Naive thymus-derived CD4-positive, alpha-beta T cell (primary cell): ENCODE measurements at regions of chr14 and their contacts with region 1.

Region 1: DNA sequence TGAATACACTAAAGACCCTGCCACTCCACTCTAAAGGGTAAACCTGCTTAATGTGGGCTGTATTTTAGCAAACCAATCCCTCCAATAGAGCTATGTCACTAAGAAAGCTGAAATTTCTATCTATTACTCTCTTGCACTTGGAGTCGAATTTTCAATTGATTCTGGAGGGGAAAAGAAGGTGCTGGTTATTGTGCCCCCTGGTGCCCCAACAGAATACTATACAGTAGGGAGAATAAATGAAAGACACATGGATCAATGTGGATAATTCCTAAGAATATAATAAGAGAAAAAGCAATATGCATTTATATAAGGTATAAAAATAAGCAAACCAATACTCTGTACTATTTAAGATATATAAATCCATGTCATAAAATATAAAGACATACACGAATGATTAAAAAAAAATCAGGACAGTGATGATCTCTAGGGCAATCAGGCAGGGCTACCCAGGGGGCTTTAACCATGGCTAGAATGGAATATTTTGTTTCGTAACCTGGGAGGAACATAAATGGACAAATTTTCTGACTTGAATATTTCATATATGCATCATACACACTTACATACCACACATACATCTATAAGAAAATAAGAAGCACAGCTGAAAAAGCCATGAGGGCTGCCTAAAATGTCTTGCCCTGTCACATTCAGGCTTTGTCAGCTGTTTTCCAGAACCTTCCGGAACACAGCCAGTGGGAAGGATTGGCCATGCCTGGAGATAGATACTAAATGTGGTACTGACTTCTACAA is 54.4 kb downstream of the EFCAB11 start:
- DNase-seq: peak in 4 of 9 donors; percentile 10 to 34 (median 20)
- ATAC-seq: no peak
- H3K4me3 ChIP-seq: no peak overlapping the region
- H3K4me3 Mint-ChIP-seq: no peak overlapping the region
- H3K27ac ChIP-seq: no peak overlapping the region
- H3K27ac Mint-ChIP-seq: no peak overlapping the region
- H3K4me1 ChIP-seq: peaks cover 0 to 13% of the 10 kb centered on the region in 2 donors
- H3K4me1 Mint-ChIP-seq: peaks cover 8 to 16% (median 15%) of the 10 kb centered on the region in 7 donors
- H3K27me3 ChIP-seq: no peaks in the 10 kb centered on the region
- H3K27me3 Mint-ChIP-seq: peaks cover 0 to 13% (median 7%) of the 10 kb centered on the region in 5 donors

Region 2: GRCh38 chr14:89027097-89027740 is 872.9 kb before region 1 on chr14:
- CTCF ChIA-PET with region 1: interaction called, 4 read pairs
- POLR2A ChIA-PET with region 1: no interaction called
- intact Hi-C with region 1: loop called in 1 of 2 experiments (anchors 1 kb)
- DNase-seq: peak; percentile 32 to 76 (median 63)
- ATAC-seq: peak; percentile 92
- H3K4me3 ChIP-seq: peak overlapping the region; percentile 66
- H3K4me3 Mint-ChIP-seq: peak overlapping the region; percentile 65 to 79 (median 68)
- H3K27ac ChIP-seq: no peak overlapping the region
- H3K27ac Mint-ChIP-seq: no peak overlapping the region
- H3K4me1 ChIP-seq: peaks cover 4 to 5% of the 10 kb centered on the region in 2 donors
- H3K4me1 Mint-ChIP-seq: peaks cover 0 to 7% (median 0%) of the 10 kb centered on the region in 7 donors
- H3K27me3 ChIP-seq: peaks cover 0 to 15% of the 10 kb centered on the region in 2 donors
- H3K27me3 Mint-ChIP-seq: peaks cover 63 to 79% (median 67%) of the 10 kb centered on the region in 5 donors

Region 3: DNA sequence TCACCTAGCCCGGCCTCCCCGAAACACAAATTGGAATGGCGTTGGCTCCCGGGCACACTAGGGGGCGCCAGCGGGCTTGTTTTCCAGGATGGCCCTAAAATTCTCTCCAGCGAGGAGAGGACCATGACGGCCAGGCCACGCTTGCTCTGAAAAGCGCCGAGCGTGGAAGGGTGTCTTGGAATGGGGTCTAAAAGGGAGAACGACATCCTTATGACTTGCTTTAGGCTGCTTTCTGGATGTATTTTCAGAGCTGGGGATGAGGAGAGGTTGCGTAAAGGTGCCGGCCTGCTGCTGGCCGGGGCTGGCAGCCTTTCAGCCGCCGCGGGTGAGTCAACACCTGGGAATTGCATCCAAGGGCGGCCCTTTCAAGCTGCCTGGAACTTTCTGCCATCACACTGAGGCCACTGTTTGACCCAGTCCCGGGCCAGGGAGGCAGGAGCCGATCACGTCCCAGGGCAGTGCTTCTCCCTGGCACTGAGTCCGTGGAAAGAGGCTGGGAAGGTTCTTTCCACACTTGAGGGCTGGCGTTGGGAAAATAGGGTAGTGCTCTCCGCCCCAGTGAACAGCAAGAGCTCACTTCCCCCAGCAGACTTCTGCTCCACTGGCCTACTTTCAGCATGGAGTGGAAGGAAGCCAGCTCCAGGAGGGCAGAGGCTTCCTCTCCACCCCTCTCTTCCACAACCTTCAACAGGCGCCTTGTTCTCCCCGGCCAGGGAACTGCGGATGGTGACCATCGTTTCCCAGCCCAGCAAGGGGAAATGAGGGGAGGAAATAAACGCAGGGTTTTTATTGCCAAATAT is 859.4 kb before region 1 on chr14:
- CTCF ChIA-PET with region 1: interaction called, 5 read pairs
- POLR2A ChIA-PET with region 1: no interaction called
- intact Hi-C with region 1: loop called (anchors 1 kb)
- DNase-seq: peak; percentile 54 to 84 (median 71)
- ATAC-seq: peak; percentile 88
- H3K4me3 ChIP-seq: peak overlapping the region; percentile 48
- H3K4me3 Mint-ChIP-seq: peak overlapping the region; percentile 59 to 89 (median 74)
- H3K27ac ChIP-seq: no peak overlapping the region
- H3K27ac Mint-ChIP-seq: no peak overlapping the region
- H3K4me1 ChIP-seq: peaks cover 6 to 10% of the 10 kb centered on the region in 2 donors
- H3K4me1 Mint-ChIP-seq: peaks cover 0 to 16% (median 13%) of the 10 kb centered on the region in 7 donors
- H3K27me3 ChIP-seq: peaks cover 0 to 3% of the 10 kb centered on the region in 2 donors
- H3K27me3 Mint-ChIP-seq: peaks cover 23 to 36% (median 27%) of the 10 kb centered on the region in 5 donors